ENCODE measurements at regions of chr2 and their contacts with region 1.

Region 1: GRCh38 chr2:74458132-74458925 is at the start of gene WBP1:
- DNase-seq: peak; percentile 100
- H3K4me3 ChIP-seq: peak within 1 kb of the TSS; percentile 92
- H3K27ac ChIP-seq: peak within 1 kb of the TSS; percentile 92
- H3K4me1 ChIP-seq: peaks cover 16% of the 10 kb centered on the region
- H3K27me3 ChIP-seq: no peaks in the 10 kb centered on the region
- CTCF ChIP-seq: no peak
- total RNA-seq, gene WBP1: 37.9 and 53.6 TPM in 2 replicates

Region 2: GRCh38 chr2:74482801-74483674 is 24.7 kb after region 1 on chr2 and contains the starts of genes CCDC142 and TTC31:
- CTCF ChIA-PET with region 1: interaction called, 5 read pairs
- POLR2A ChIA-PET with region 1: no interaction called
- intact Hi-C with region 1: loop called (anchors 1 kb)
- DNase-seq: peak; percentile 97
- H3K4me3 ChIP-seq: peak within 1 kb of the TSS; percentile 84
- H3K27ac ChIP-seq: peak within 1 kb of the TSS; percentile 84
- H3K4me1 ChIP-seq: peaks cover 18% of the 10 kb centered on the region
- H3K27me3 ChIP-seq: no peaks in the 10 kb centered on the region
- CTCF ChIP-seq: peak; percentile 97
- total RNA-seq, gene CCDC142: 20.4 and 27.4 TPM in 2 replicates
- total RNA-seq, gene TTC31: 25.8 and 28.6 TPM in 2 replicates

Region 3: GRCh38 chr2:74566754-74567085 is 108.4 kb after region 1 on chr2:
- CTCF ChIA-PET with region 1: no interaction called
- POLR2A ChIA-PET with region 1: interaction called, 12 read pairs
- intact Hi-C with region 1: no loop called
- DNase-seq: peak; percentile 85
- H3K4me3 ChIP-seq: no peak overlapping the region
- H3K27ac ChIP-seq: no peak overlapping the region
- H3K4me1 ChIP-seq: no peaks in the 10 kb centered on the region
- H3K27me3 ChIP-seq: no peaks in the 10 kb centered on the region
- CTCF ChIP-seq: no peak

Measured in A673 (cell line).